ENCODE measurements at regions of chr2 and their contacts with region 1.

Region 1: DNA sequence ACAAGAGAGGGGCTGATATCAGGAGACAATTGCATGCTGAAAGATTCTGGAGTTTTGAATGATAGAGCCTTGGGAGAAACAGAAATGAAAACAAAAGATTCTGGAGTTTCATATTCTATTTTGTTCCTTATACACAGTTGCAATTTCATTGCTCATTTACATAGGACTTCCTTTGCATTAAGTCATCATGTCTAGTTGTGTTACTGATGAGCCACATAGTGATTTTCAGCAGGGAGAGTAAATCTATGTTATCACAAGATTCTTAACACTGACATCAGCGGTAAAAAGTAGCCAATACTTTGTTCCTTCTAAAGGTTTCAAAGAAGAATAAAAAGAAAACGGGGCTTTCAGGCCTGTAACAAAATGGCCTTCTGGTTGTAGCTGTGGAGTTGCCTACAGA is 7.1 kb downstream of the ADAM17 start:
- DNase-seq: no peak
- ATAC-seq: no peak
- H3K4me3 ChIP-seq: no peak overlapping the region
- H3K27ac ChIP-seq: no peak overlapping the region
- H3K4me1 ChIP-seq: no peaks in the 10 kb centered on the region
- H3K27me3 ChIP-seq: no peaks in the 10 kb centered on the region

Region 2: GRCh38 chr2:9050122-9050809 is 498.2 kb before region 1 on chr2:
- intact Hi-C with region 1: no loop called
- DNase-seq: no peak
- ATAC-seq: no peak
- H3K4me3 ChIP-seq: no peak overlapping the region
- H3K27ac ChIP-seq: no peak overlapping the region
- H3K4me1 ChIP-seq: no peaks in the 10 kb centered on the region
- H3K27me3 ChIP-seq: no peaks in the 10 kb centered on the region

Region 3: GRCh38 chr2:9497017-9497416 is 51.5 kb before region 1 on chr2:
- intact Hi-C with region 1: loop called (anchors 5 to 10 kb)
- DNase-seq: no peak
- ATAC-seq: no peak
- H3K4me3 ChIP-seq: no peak overlapping the region
- H3K27ac ChIP-seq: peak overlapping the region in 1 of 2 donors; percentile 26
- H3K4me1 ChIP-seq: peaks cover 0 to 1% of the 10 kb centered on the region in 2 donors
- H3K27me3 ChIP-seq: no peaks in the 10 kb centered on the region

Region 4: GRCh38 chr2:9573840-9574239 is 25.3 kb after region 1 on chr2:
- intact Hi-C with region 1: no loop called
- DNase-seq: no peak
- ATAC-seq: no peak
- H3K4me3 ChIP-seq: peak overlapping the region in 1 of 2 donors; percentile 7
- H3K27ac ChIP-seq: peak overlapping the region; percentile 68 to 93
- H3K4me1 ChIP-seq: no peaks in the 10 kb centered on the region
- H3K27me3 ChIP-seq: no peaks in the 10 kb centered on the region

Region 5: DNA sequence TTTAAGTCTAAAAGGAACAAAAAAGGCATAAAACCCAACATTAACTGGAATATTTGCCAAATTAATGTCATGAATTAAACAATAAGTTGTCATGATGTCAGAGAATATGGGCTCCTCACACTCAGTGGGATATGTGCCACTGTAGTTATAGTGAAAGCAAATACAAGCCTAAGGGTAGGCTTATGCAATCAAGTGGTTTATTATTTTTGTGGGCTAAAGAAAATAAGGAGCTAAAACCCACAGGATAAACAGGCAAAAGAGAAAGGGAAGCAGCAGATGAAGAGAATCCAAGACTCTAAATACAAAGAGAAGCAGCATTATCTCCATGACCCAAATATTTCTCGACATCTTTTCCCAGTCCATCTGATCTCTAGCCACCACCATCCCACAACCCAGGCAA is 64.8 kb after region 1 on chr2:
- intact Hi-C with region 1: loop called in 1 of 2 experiments (anchors 5 kb)
- DNase-seq: no peak
- ATAC-seq: no peak
- H3K4me3 ChIP-seq: no peak overlapping the region
- H3K27ac ChIP-seq: no peak overlapping the region
- H3K4me1 ChIP-seq: peaks cover 0 to 16% of the 10 kb centered on the region in 2 donors
- H3K27me3 ChIP-seq: no peaks in the 10 kb centered on the region

Measured in aorta (tissue), 5 donors.